ENCODE measurements at regions of chr4 and their contacts with region 1.

Region 1: DNA sequence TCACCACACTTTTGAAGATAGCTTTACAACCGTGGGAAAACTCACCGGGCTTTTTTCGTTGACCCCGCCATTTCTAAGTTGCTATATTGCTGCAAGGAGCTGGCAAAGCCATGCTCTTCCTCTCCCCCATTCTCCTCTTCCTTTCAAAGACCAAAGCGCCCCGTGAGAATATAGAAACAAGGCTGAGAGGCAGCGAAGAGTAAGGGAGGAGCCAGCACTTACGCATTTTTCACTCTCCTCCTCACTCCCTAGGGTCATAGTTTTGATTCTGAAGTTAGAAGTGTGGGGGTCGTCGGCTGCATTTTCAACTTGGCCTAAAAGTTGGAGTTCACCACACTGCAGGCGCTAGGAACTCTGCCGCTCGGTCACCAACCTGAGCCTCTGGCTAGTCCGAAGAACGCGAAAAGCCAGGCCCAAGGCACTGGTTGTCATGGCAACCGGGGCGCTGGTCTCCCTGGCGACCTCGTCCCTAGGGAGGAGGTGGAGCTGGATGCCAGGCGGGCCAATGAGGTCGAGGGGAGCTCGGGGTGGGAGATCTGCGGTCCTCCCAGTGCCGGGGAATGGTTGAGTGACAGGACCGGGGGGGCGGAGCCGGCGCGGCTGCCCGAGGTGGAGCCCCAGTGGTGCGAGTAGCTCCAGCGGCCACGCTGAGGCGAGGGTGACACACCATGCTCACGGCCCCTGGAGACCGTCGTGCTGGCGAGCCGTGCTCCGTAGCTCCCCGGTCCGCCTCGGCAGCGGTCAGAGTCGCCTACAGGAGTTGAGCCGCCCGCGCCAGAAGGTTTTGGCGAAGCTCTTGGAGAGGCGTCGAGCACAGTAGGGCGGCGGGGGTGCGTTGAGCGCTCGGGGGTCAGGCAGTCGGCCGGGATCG is at the start of gene PTPN13:
- DNase-seq: peak; percentile 96

Region 2: GRCh38 chr4:86497980-86498862 is 95.7 kb before region 1 on chr4:
- CTCF ChIA-PET with region 1: interaction called, 7 read pairs
- POLR2A ChIA-PET with region 1: interaction called, 15 read pairs
- DNase-seq: peak; percentile 43

Region 3: GRCh38 chr4:86560447-86560846 is 33.5 kb before region 1 on chr4:
- CTCF ChIA-PET with region 1: no interaction called
- POLR2A ChIA-PET with region 1: interaction called, 10 read pairs
- DNase-seq: peak; percentile 24

Region 4: GRCh38 chr4:86582410-86582809 is 11.5 kb before region 1 on chr4:
- CTCF ChIA-PET with region 1: no interaction called
- POLR2A ChIA-PET with region 1: interaction called, 14 read pairs
- DNase-seq: no peak

Measured in HEK293T (cell line).